ENCODE measurements at regions of chr3 and their contacts with region 1.

Region 1: DNA sequence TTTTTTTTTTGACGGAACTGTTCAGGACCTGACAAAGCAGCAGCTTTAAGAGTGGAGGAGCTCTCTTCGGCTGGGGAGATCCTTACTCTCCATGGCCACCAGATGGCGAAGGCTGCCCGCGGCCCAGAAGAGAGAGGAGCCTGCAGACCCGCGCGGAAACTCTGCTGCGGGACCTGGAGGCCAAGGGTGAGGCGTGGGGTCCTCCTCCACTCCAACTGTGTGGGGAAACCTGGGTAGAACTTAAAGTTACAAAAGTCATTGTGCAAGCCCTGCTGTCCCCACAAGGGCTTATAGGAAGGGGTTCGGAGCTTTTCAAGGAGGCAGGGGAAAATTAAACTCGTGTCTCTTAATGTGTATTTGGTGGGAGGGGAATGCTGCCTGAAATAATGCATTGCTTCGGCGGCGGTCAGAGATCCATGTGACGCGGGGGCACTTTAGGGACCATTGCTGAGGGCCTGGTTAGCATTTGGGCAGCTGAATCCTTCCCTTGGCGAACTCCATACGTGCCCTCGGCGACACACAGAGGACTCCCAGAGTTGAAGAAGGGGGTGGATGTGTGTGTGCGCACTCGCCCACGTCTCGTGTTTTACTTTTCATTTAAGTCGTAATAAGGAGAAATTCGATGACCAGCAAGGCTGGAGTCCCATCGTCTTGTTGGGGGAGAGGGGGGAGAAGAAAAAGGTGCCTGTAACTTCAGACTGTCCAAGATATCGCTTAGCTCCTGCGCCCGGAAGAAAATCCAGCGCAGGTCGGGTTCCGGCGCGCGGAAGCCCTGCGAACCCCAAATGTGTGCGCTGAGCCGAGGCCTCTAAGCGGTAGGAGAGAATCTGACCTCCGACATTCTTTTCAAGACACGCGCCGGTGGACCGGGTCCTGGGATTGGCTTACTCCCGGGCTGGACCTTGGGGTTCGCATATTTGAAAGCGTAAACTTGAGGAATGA is 9.7 kb downstream of the EOMES start:
- DNase-seq: peak; percentile 37
- H3K4me3 ChIP-seq: peak overlapping the region; percentile 57
- H3K27ac ChIP-seq: no peak overlapping the region
- H3K27me3 ChIP-seq: peaks cover 72% of the 10 kb centered on the region
- CTCF ChIP-seq: peak; percentile 91

Region 2: GRCh38 chr3:27578032-27578431 is 134.4 kb before region 1 on chr3:
- CTCF ChIA-PET with region 1: no interaction called
- POLR2A ChIA-PET with region 1: no interaction called
- DNase-seq: no peak
- H3K4me3 ChIP-seq: no peak overlapping the region
- H3K27ac ChIP-seq: no peak overlapping the region
- H3K27me3 ChIP-seq: no peaks in the 10 kb centered on the region
- CTCF ChIP-seq: no peak

Region 3: GRCh38 chr3:27659279-27660021 is 53.0 kb before region 1 on chr3:
- CTCF ChIA-PET with region 1: interaction called, 13 read pairs
- POLR2A ChIA-PET with region 1: no interaction called
- DNase-seq: no peak
- H3K4me3 ChIP-seq: no peak overlapping the region
- H3K27ac ChIP-seq: no peak overlapping the region
- H3K27me3 ChIP-seq: no peaks in the 10 kb centered on the region
- CTCF ChIP-seq: peak; percentile 80

Region 4: DNA sequence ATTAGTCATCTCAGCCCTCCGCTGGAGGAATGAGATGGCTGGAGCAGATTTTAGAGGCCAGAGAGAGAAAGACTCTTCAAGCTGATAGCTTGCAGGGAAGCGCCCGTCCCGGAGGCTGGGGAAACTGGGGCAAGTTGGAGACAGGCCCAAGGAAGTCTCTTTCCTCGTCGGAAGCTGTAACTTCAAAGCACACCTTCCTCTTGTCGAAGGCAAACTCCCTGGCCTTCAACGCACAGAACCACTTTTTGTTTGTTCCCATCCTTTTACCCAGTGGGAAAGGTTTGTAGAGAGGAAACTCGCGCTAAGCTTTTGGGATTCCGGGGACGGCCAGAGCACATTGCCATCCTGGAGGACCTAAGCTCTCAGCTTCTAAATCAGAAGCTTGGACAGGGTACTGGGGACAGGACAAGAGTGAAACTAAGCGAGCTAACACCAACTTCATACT is 10.6 kb after region 1 on chr3:
- CTCF ChIA-PET with region 1: interaction called, 26 read pairs
- POLR2A ChIA-PET with region 1: no interaction called
- DNase-seq: no peak
- H3K4me3 ChIP-seq: no peak overlapping the region
- H3K27ac ChIP-seq: no peak overlapping the region
- H3K27me3 ChIP-seq: peaks cover 90% of the 10 kb centered on the region
- CTCF ChIP-seq: no peak

Region 5: GRCh38 chr3:28068342-28068741 is 355.9 kb after region 1 on chr3:
- CTCF ChIA-PET with region 1: no interaction called
- POLR2A ChIA-PET with region 1: no interaction called
- DNase-seq: no peak
- H3K4me3 ChIP-seq: no peak overlapping the region
- H3K27ac ChIP-seq: no peak overlapping the region
- H3K27me3 ChIP-seq: no peaks in the 10 kb centered on the region
- CTCF ChIP-seq: no peak

Region 6: DNA sequence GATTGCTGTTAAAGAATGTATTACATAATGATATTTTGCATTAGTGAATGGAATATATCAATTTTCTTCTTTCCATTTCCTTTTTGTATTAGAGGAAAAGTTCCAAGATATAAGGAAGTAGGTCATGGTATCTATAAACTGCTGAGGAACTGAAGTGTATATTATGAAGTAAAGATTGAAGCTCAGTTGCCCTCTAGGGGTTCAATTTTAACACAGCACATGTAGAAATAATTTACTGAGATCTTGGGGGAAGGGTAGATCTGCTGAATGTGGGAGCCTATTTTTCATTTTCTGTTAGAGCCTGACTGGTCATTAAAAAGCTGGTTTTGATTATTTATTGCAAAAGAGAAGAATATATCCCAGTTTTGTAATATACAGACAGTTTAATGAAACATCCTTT is 574.2 kb after region 1 on chr3:
- CTCF ChIA-PET with region 1: interaction called, 50 read pairs
- POLR2A ChIA-PET with region 1: no interaction called
- DNase-seq: no peak
- H3K4me3 ChIP-seq: no peak overlapping the region
- H3K27ac ChIP-seq: no peak overlapping the region
- H3K27me3 ChIP-seq: no peaks in the 10 kb centered on the region
- CTCF ChIP-seq: peak; percentile 65

Region 7: GRCh38 chr3:28317438-28318022 is 605.1 kb after region 1 on chr3:
- CTCF ChIA-PET with region 1: interaction called, 45 read pairs
- POLR2A ChIA-PET with region 1: no interaction called
- DNase-seq: no peak
- H3K4me3 ChIP-seq: no peak overlapping the region
- H3K27ac ChIP-seq: no peak overlapping the region
- H3K27me3 ChIP-seq: no peaks in the 10 kb centered on the region
- CTCF ChIP-seq: peak; percentile 65

Region 8: DNA sequence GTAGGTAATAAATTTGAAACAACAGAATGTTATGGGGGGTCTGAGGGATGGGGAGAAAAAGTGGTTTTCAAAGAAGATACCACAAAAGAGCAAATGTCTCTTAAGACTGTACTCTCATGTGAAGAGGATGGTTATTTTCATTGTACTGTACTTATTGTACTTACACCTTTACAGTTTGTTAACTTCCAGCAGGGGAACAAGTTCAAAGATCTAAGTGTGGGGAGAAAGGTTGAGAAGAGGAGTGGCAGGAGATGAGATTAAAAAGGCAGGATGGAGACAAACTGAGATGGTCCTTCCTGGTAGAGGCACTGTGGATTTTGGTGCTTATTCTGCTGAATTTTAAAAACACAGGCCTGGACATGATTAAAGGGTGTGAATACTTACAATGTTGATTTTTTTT is 630.7 kb after region 1 on chr3:
- CTCF ChIA-PET with region 1: interaction called, 15 read pairs
- POLR2A ChIA-PET with region 1: no interaction called
- DNase-seq: no peak
- H3K4me3 ChIP-seq: peak overlapping the region; percentile 52
- H3K27ac ChIP-seq: no peak overlapping the region
- H3K27me3 ChIP-seq: no peaks in the 10 kb centered on the region
- CTCF ChIP-seq: no peak